Activated naive CD4-positive, alpha-beta T cell treated with anti-CD3 and anti-CD28 coated beads, Interleukin-2, amount 10 ng/mL, durations not matched to agents 7 days and 5 days (primary cell): ENCODE measurements at regions of chr17 and their contacts with region 1.

Region 1: GRCh38 chr17:50094753-50095619 is at the start of gene PDK2:
- DNase-seq: peak; percentile 97
- H3K4me3 Mint-ChIP-seq: peak within 1 kb of the TSS; percentile 97
- H3K27ac Mint-ChIP-seq: peak within 1 kb of the TSS; percentile 94
- H3K4me1 Mint-ChIP-seq: peaks cover 34% of the 10 kb centered on the region
- H3K27me3 Mint-ChIP-seq: peaks cover 5% of the 10 kb centered on the region

Region 2: DNA sequence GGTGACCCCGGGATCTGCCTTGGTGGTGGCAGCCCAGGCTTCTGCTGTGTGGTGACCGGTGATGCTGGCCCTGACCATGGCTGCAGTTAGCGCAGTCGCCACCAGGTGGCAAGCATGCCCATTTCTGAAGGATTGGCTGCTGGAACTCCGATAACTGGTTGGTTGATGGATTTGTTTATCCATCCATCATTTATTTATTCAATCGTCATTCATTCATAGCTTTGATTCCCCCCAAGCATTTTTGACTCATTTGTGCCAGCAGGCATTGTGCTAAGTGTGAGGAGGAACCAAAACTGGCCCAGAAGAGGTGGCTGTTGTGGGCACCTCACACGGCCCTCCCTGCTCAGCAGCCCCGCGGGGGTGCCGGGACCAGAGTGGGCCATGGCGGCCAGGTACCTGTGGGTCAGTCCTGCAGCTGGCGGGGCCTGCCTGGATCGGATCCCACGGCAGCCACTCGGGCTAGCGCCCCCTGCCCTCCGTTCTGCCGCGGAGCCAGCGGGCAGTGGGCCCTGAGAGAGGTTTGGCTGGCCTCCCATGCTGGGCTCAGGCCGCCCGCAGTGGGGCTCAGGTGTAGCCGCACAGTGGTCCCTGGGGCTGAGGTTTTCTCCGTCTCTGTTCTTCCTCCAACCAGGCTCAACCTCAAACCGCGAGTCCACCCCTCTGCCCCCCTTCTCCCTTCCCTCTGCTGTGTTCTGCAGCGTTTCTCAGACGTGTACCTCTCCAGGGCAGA is 67.9 kb before region 1 on chr17:
- CTCF ChIA-PET with region 1: interaction called, 27 read pairs
- DNase-seq: peak; percentile 82
- H3K4me3 Mint-ChIP-seq: no peak overlapping the region
- H3K27ac Mint-ChIP-seq: no peak overlapping the region
- H3K4me1 Mint-ChIP-seq: peaks cover 18% of the 10 kb centered on the region
- H3K27me3 Mint-ChIP-seq: peaks cover 50% of the 10 kb centered on the region

Region 3: DNA sequence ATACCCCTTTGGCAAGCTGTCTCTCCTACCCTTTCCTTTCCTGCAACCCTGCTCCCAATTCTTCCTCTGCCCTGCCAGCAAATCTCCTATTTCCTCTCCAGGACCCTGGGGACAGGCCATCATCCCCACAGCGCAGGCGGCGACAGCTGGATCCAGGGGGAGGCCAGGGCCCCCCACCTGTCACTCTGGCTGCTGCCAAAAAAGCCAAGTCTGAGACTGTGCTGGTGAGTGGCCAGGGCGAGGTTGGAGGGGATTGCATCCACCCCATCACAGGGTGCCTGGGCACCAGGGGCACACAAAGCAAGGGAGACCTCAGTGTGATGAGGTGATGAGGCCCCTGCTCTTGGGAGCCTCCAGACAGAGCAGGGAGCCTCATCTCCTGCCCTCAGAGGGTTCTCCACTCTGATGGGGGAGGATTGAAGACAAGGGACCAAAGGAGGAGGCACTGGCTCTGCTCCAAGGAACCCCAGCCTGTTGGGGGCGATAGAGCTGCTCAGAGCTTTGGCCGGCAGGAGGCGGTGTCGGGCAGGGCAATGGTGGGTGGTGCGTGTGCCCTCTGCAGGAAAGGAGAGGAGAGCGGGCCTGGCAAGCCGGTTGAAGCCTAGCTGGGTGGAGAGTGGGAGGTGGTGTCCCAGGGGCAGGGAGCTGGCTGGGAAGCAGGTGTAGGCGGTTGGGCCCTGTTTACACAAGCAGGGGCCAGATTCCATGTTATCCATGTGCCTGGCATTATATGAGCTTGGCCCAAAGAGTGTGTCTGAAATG is 15.5 kb before region 1 on chr17:
- CTCF ChIA-PET with region 1: interaction called, 12 read pairs
- DNase-seq: no peak
- H3K4me3 Mint-ChIP-seq: no peak overlapping the region
- H3K27ac Mint-ChIP-seq: no peak overlapping the region
- H3K4me1 Mint-ChIP-seq: no peaks in the 10 kb centered on the region
- H3K27me3 Mint-ChIP-seq: no peaks in the 10 kb centered on the region

Region 4: GRCh38 chr17:50161023-50161910 is 66.3 kb after region 1 on chr17:
- CTCF ChIA-PET with region 1: interaction called, 17 read pairs
- DNase-seq: peak; percentile 95
- H3K4me3 Mint-ChIP-seq: peak overlapping the region; percentile 67
- H3K27ac Mint-ChIP-seq: peak overlapping the region; percentile 83
- H3K4me1 Mint-ChIP-seq: peaks cover 48% of the 10 kb centered on the region
- H3K27me3 Mint-ChIP-seq: peaks cover 24% of the 10 kb centered on the region

Region 5: DNA sequence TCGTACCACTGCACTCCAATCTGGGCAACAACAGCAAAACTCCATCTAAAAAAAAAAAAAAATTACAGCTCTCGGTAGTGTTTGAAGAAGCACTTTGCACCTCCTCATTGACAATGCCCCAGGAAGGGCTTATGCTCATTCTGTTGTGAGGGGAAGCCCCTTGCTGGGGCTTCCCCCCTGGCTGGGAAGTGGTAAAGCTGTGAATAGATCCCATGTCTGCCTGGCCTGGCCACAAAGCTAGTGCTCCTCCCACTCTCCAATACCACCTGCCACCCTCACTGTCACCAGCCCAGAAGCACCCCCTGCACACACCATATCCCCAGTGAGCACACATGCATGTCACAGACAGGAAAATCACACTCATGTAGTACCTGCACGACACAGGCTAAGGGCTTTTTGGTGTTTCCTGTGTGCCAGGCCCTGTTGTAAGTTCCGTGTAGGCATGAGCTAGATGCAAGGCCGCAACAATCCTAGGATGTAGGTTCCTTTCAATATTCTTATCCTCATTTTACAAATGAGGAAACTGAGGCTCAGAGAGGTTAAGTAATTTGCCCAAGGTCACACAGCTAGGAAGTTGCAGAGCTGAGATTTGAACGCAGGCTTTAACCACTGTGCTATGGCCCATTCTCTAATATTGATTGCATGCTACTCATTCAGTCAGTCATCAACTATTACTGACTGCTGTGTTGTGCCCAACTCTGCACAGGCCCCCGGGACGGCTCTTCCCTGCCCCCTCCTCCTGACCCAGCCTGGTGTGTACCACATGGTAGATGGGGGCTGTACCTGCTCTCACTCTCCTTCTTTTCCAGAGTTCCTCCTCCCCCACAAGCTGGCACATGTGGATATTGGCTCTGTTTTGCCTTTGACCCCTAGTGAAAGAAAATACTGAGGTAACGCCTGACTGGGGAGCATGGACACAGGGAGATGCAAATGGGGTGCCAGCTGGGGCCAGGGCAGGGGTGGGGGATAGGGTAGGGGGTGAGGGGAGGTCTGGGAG is 118.3 kb after region 1 on chr17:
- CTCF ChIA-PET with region 1: no interaction called
- DNase-seq: peak; percentile 70
- H3K4me3 Mint-ChIP-seq: no peak overlapping the region
- H3K27ac Mint-ChIP-seq: no peak overlapping the region
- H3K4me1 Mint-ChIP-seq: peaks cover 11% of the 10 kb centered on the region
- H3K27me3 Mint-ChIP-seq: peaks cover 79% of the 10 kb centered on the region